HepG2 (cell line): ENCODE measurements at regions of chr12 and their contacts with region 1.

Region 1: DNA sequence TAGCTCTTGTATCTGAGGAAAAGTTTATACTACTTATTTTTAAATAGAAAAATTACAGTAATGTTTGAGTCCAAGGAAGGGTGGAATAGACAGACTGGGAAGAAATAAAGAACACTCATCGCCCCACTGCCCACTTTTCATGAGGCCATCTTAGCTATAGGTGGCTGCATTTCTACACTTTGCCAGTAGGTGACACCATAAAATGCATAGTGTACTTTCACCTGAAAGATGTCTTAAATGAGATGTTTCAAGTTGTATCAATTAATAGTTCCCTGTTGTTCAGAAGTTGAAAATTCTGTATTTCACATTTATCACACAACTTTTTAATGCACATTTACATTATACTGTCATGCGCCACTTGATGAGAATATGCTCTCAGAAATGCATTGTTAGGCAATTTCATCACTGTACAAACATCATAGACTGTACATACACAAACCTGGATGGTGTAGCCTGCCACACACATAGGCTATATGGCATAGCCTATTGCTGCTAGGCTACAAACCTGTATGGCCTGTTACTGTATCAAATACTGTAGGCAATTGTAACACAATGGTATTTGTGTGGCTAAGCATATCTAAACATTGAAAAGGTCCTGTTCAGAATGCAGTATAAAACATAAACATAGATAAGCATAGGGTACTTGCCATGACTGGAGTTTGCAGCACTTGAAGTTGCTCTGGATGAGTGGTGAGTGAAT is 27.6 kb downstream of the PMCH start:
- DNase-seq: peak; percentile 9
- ATAC-seq: peak; percentile 72
- H3K4me3 ChIP-seq: no peak overlapping the region
- H3K27ac ChIP-seq: no peak overlapping the region
- H3K4me1 ChIP-seq: no peaks in the 10 kb centered on the region
- H3K27me3 ChIP-seq: no peaks in the 10 kb centered on the region
- CTCF ChIP-seq: peak; percentile 73
- EP300 ChIP-seq: no peak
- POLR2A ChIP-seq: no peak
- RAD21 ChIP-seq: no peak

Region 2: DNA sequence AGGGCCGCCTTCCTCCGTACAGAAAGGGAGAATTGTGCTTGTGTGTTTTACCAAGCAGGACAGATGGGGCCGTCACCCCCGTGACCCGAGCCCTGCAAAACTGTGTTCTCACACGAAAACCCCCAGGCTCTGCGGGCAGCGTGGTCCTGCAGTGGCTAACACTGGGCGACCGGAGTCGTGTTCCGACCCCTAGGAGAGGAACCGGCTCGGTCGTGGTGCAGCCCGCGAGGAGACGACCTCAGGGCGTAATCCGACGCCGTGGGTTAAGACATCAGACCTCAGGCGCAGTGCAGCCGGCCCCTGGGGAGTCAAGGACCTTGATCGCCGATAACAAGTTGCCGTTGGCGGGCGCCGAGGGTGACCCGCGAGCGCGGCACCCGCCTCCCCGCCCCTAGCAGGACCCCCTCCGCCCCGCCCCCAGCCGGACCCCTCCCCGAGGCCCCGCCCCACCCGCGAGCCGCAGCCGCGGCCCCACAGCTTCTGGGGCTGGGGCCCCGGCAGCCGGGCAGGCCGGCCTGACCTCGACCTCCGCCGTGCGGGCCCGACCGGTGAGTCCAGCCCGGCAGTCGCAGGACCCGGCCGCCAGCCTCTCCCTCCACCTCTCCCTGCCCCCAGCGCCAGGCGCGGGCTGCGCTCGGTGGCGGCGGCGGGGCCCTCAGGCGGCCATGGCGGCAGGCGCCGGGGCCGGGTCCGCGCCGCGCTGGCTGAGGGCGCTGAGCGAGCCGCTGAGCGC is 472.7 kb before region 1 on chr12 and contains the start of gene CHPT1:
- CTCF ChIA-PET with region 1: no interaction called
- POLR2A ChIA-PET with region 1: no interaction called
- in situ Hi-C with region 1: no loop called
- intact Hi-C with region 1: no loop called
- DNase-seq: peak; percentile 81
- ATAC-seq: peak; percentile 84
- H3K4me3 ChIP-seq: peak within 1 kb of the TSS; percentile 97 to 100 (median 99)
- H3K27ac ChIP-seq: peak within 1 kb of the TSS; percentile 98
- H3K4me1 ChIP-seq: peaks cover 55% of the 10 kb centered on the region
- H3K27me3 ChIP-seq: no peaks in the 10 kb centered on the region; a peak in 2 of 5 replicates
- CTCF ChIP-seq: no peak
- EP300 ChIP-seq: 0 out of 4 replicates have a peak, but pooled peaks of 1 of the 2 experiments have one; percentile 39
- POLR2A ChIP-seq: peak; percentile 68 to 73; a peak in 3 of 4 replicates
- RAD21 ChIP-seq: peak; percentile 36; the same call in 1 of the 2 replicates
- total RNA-seq, gene CHPT1: 129 and 178 TPM in 2 replicates

Region 3: DNA sequence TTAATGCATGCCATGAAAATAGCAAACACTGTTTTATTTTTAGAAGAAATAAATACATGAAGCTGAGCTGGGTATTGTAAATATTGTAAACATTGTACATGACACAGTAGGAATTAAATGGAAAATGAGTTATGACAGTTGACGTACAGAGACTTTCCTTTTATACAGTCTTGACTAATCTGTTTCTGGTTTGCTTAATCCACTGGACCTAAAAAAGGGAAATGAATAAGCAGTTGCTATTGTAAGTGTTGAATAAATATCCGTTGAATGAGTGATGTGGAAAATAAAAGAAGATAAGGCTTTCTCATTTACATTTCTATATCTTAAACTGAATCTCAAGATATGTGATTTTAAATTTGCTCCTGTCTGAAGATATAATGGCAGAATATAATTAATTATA is 12.6 kb after region 1 on chr12:
- CTCF ChIA-PET with region 1: no interaction called
- POLR2A ChIA-PET with region 1: no interaction called
- in situ Hi-C with region 1: no loop called
- intact Hi-C with region 1: no loop called
- DNase-seq: no peak
- ATAC-seq: no peak
- H3K4me3 ChIP-seq: no peak overlapping the region
- H3K27ac ChIP-seq: no peak overlapping the region
- H3K4me1 ChIP-seq: no peaks in the 10 kb centered on the region
- H3K27me3 ChIP-seq: no peaks in the 10 kb centered on the region
- CTCF ChIP-seq: no peak
- EP300 ChIP-seq: no peak
- POLR2A ChIP-seq: no peak
- RAD21 ChIP-seq: no peak

Region 4: GRCh38 chr12:102484428-102484958 is 314.4 kb after region 1 on chr12:
- CTCF ChIA-PET with region 1: no interaction called
- POLR2A ChIA-PET with region 1: no interaction called
- in situ Hi-C with region 1: no loop called
- intact Hi-C with region 1: loop called (anchors 1 kb)
- DNase-seq: peak; percentile 26
- ATAC-seq: peak; percentile 62
- H3K4me3 ChIP-seq: peak overlapping the region in 1 of 3 experiments; percentile 23; a peak in 1 of 6 replicates
- H3K27ac ChIP-seq: no peak overlapping the region
- H3K4me1 ChIP-seq: no peaks in the 10 kb centered on the region
- H3K27me3 ChIP-seq: no peaks in the 10 kb centered on the region
- CTCF ChIP-seq: peak; percentile 79
- EP300 ChIP-seq: no peak
- POLR2A ChIP-seq: no peak
- RAD21 ChIP-seq: no peak

Region 5: GRCh38 chr12:102543494-102544485 is 373.7 kb after region 1 on chr12:
- CTCF ChIA-PET with region 1: no interaction called
- POLR2A ChIA-PET with region 1: no interaction called
- in situ Hi-C with region 1: no loop called
- intact Hi-C with region 1: loop called (anchors 1 kb)
- DNase-seq: no peak
- ATAC-seq: peak; percentile 64
- H3K4me3 ChIP-seq: no peak overlapping the region
- H3K27ac ChIP-seq: no peak overlapping the region
- H3K4me1 ChIP-seq: no peaks in the 10 kb centered on the region
- H3K27me3 ChIP-seq: no peaks in the 10 kb centered on the region
- CTCF ChIP-seq: peak; percentile 45
- EP300 ChIP-seq: no peak
- POLR2A ChIP-seq: no peak
- RAD21 ChIP-seq: no peak